HEK293T (cell line): ENCODE measurements at regions of chr1 and their contacts with region 1.

Region 1: GRCh38 chr1:84781946-84782771 is 91.9 kb upstream of the SSX2IP start:
- DNase-seq: peak; percentile 91

Region 2: DNA sequence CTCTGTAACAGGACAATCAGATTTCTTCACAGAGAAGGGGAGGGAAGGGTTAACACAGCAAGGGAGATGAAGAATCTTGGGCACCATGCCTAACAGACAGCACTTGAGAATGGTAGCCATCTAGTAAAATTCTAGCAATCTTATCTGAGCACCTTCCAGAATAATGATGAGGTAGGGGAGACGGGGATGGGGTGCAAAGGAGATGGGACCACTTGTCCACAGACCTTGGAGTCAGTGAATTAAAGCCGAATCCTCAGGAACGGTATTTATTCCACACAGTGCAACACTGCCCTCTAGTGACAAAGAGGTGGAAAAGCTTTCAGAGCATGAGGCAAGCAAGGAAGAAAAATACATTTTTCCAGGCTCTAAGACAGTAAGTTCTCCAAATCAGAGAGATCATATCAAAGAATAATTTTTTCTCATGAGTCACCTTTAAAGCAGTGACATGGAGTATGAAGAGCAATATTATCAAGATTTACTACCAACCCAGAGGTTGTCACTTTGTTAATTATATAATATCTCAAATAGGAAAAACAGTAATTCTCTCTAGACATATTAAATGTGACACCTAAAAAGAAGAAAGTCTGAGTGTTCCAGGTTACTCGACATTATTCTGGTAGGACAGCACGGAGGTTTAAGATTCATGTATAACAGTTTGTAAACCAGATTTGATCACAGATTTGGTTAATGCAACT is 154.1 kb after region 1 on chr1:
- CTCF ChIA-PET with region 1: interaction called, 15 read pairs
- POLR2A ChIA-PET with region 1: no interaction called
- DNase-seq: peak; percentile 82